Activated B cell treated with CpG ODN at 0.5 μM for 24 hours (primary cell): ENCODE measurements at regions of chr6 and their contacts with region 1.

Region 1: GRCh38 chr6:41092421-41093140 is 19.8 kb downstream of the NFYA start:
- DNase-seq: no peak
- ATAC-seq: no peak
- H3K4me3 Mint-ChIP-seq: no peak overlapping the region
- H3K27ac Mint-ChIP-seq: no peak overlapping the region
- H3K4me1 Mint-ChIP-seq: no peaks in the 10 kb centered on the region
- H3K27me3 Mint-ChIP-seq: no peaks in the 10 kb centered on the region
- CTCF ChIP-seq: no peak

Region 2: DNA sequence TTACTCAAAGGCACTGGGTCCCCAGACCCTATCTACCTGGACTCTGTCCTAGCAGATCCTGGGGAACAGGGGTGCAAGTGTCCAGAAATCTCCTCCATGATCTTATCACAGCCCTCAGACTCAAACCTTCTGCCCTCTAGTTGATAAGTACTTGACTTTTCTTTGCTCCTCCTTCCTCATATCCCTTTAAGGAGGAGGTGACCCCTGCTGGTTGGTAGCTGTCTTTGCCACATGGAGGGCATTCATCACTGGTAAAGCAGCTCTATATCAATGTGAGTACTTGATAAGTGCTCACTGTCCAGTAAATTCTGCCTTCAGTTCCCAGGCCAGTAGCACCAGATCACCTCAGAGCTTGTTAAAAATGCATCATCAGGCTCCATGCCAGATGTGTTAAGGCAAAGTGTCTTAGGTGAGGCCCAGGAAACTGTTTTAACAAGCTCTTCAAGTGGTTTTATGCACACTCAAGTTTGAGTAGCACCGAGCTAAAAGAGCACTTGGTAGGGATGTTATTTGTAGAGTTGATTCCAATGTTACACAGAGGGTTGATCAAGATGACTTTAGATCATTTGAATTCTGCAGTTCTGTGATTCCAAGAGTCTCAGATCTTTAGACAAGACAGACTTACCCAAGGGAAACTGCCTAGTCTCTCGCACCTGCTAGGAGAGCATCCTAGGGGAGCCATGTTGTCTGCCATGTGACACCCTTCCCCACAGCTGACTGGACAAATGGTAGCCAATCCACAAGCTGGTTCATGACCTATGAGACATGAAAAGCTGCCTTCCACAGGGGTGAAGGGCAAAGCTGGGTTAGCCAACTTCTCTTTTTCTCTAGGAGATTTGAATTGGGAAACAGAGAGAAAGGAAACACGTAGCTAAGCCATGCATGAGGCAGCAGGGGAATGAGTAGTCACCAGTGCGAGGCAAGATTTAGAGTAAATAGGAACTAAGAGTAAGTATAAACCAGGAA is 89.8 kb after region 1 on chr6:
- CTCF ChIA-PET with region 1: interaction called, 18 read pairs
- POLR2A ChIA-PET with region 1: no interaction called
- intact Hi-C with region 1: loop called (anchors 1 kb)
- DNase-seq: no peak
- ATAC-seq: peak; percentile 88
- H3K4me3 Mint-ChIP-seq: no peak overlapping the region
- H3K27ac Mint-ChIP-seq: peak overlapping the region; percentile 76
- H3K4me1 Mint-ChIP-seq: peaks cover 54% of the 10 kb centered on the region
- H3K27me3 Mint-ChIP-seq: no peaks in the 10 kb centered on the region
- CTCF ChIP-seq: no peak

Region 3: DNA sequence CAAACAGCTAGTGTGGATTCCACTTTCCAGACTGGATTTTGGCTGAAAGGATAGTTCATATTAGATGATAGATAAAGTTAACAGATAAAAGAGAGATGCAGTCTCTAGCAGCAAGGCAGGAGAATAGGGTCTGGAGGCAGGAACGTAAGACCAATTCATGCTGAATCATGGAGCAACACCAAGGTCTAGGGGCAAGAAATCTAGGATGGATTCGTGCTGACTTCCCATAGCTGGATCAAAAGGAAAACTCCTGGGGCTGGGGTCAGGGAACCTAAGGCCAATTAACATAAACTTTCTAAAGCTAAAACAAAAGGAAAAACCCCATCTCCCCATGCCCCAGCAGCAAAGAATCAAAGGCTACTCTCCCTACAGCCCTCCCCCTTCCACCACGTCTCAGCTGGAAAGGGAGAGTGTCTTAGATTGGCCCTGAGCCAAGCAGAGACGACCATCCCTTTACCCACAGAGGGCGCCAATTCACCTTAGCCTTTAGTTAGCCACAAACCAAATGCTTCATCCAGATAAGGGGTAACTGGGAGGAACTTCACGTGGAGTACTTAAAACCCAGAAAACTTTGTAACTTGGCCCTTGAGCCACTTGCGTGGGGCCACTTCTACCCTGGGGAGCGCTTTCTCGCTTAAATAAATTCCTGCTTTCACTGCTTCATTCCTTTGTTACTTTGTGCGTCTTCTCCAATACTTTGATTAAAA is 186.3 kb after region 1 on chr6:
- CTCF ChIA-PET with region 1: interaction called, 14 read pairs
- POLR2A ChIA-PET with region 1: no interaction called
- intact Hi-C with region 1: loop called (anchors 5 kb)
- DNase-seq: peak; percentile 29
- ATAC-seq: peak; percentile 86
- H3K4me3 Mint-ChIP-seq: peak overlapping the region; percentile 16
- H3K27ac Mint-ChIP-seq: no peak overlapping the region
- H3K4me1 Mint-ChIP-seq: peaks cover 34% of the 10 kb centered on the region
- H3K27me3 Mint-ChIP-seq: peaks cover 1% of the 10 kb centered on the region
- CTCF ChIP-seq: no peak